GM12878 (cell line): ENCODE measurements at regions of chr17 and their contacts with region 1.

Region 1: GRCh38 chr17:72120642-72121163 is at the start of gene SOX9:
- DNase-seq: peak; percentile 73
- ATAC-seq: peak; percentile 90
- H3K4me3 ChIP-seq: peak within 1 kb of the TSS; percentile 84
- H3K27ac ChIP-seq: no peak within 1 kb of the TSS; the same call in 1 of the 2 replicates
- H3K4me1 ChIP-seq: peaks cover 5% of the 10 kb centered on the region
- H3K27me3 ChIP-seq: peaks cover 9 to 17% of the 10 kb centered on the region in 2 experiments
- CTCF ChIP-seq: no peak
- EP300 ChIP-seq: no peak; a peak in 1 of 4 replicates
- POLR2A ChIP-seq: peak; percentile 63
- RAD21 ChIP-seq: 0 out of 2 replicates have a peak, but pooled peaks have one; percentile 11
- polyA plus RNA-seq, gene SOX9: 4.5 to 8.6 TPM

Region 2: GRCh38 chr17:71472809-71473789 is 647.6 kb before region 1 on chr17:
- CTCF ChIA-PET with region 1: interaction called, 6 read pairs
- POLR2A ChIA-PET with region 1: interaction called, 3 read pairs
- RAD21 ChIA-PET with region 1: interaction called, 13 read pairs
- SMC1A ChIA-PET with region 1: interaction called, 18 read pairs
- in situ Hi-C with region 1: loop called (anchors 10 kb)
- intact Hi-C with region 1: loop called (anchors 1 kb)
- DNase-seq: no peak
- ATAC-seq: peak; percentile 89
- H3K4me3 ChIP-seq: no peak overlapping the region
- H3K27ac ChIP-seq: no peak overlapping the region
- H3K4me1 ChIP-seq: no peaks in the 10 kb centered on the region
- H3K27me3 ChIP-seq: no peaks in the 10 kb centered on the region
- CTCF ChIP-seq: peak; percentile 61 to 76 (median 70); a peak in 5 of 6 replicates
- EP300 ChIP-seq: no peak
- POLR2A ChIP-seq: no peak
- RAD21 ChIP-seq: peak; percentile 84

Region 3: DNA sequence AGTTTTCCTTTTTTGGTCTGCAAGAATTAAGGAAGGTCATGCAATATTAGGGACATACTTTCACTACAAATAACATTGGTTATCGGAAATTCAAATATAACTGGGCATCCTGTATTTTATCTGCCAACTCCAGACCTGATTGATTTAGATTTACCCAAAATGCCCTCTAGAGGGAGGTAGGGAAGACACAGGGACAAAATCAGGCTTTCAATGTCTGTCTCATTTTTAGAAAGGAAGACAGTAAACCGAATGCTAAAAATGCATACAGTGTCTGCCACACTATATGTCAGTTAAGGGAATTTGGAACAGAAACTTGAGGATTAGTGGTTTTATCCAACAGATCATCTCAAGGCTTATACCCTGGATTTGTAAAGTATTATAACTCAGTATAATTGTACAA is 161.5 kb before region 1 on chr17:
- CTCF ChIA-PET with region 1: interaction called, 19 read pairs
- POLR2A ChIA-PET with region 1: no interaction called
- RAD21 ChIA-PET with region 1: interaction called, 3 read pairs
- SMC1A ChIA-PET with region 1: interaction called, 3 read pairs
- in situ Hi-C with region 1: no loop called
- intact Hi-C with region 1: no loop called
- DNase-seq: peak; percentile 1
- ATAC-seq: peak; percentile 58; the same call in 2 of the 3 replicates
- H3K4me3 ChIP-seq: no peak overlapping the region
- H3K27ac ChIP-seq: no peak overlapping the region
- H3K4me1 ChIP-seq: no peaks in the 10 kb centered on the region
- H3K27me3 ChIP-seq: no peaks in the 10 kb centered on the region
- CTCF ChIP-seq: peak; percentile 25 to 39 (median 39); a peak in 5 of 6 replicates
- EP300 ChIP-seq: no peak
- POLR2A ChIP-seq: no peak
- RAD21 ChIP-seq: peak; percentile 58

Region 4: GRCh38 chr17:72063262-72063661 is 57.4 kb before region 1 on chr17:
- CTCF ChIA-PET with region 1: no interaction called
- POLR2A ChIA-PET with region 1: no interaction called
- RAD21 ChIA-PET with region 1: no interaction called
- SMC1A ChIA-PET with region 1: no interaction called
- in situ Hi-C with region 1: no loop called
- intact Hi-C with region 1: loop called (anchors 5 kb)
- DNase-seq: no peak
- ATAC-seq: no peak
- H3K4me3 ChIP-seq: no peak overlapping the region
- H3K27ac ChIP-seq: no peak overlapping the region
- H3K4me1 ChIP-seq: no peaks in the 10 kb centered on the region
- H3K27me3 ChIP-seq: no peaks in the 10 kb centered on the region
- CTCF ChIP-seq: no peak
- EP300 ChIP-seq: no peak
- POLR2A ChIP-seq: no peak
- RAD21 ChIP-seq: no peak

Region 5: DNA sequence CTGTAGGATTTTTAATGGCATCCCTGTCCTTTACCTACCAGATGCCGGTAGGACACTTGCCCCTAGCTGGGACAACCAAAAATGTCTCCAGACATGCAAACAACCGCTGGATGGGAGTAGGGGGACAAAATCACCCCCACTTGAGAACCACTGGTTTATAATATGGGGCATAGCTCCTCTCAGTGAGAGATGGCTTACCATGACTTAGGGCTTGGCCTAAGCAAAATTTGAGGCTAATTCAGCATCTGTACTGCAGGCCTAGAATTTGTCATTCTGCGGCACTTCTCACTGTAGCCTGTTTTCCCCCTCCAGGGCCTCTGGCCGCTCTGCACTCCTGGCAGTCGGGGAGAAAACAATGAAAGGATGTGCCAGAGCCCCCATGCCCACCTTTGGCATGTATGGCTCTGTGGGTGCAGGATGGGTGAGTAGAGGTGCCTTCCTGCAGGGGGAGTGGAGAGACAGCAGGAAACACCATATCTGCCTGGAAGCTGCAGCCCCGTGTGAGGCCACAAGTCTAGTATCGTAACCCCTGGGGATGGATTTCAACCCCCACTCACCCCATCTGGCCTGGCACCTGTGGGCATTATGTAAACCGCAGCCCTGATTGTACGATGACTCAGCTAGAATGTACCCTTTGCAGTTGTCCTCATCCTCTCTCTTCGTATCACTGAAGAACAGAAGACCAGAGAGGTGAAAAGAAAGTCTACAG is 268.2 kb after region 1 on chr17:
- CTCF ChIA-PET with region 1: no interaction called
- POLR2A ChIA-PET with region 1: no interaction called
- RAD21 ChIA-PET with region 1: interaction called, 8 read pairs
- SMC1A ChIA-PET with region 1: interaction called, 10 read pairs
- in situ Hi-C with region 1: no loop called
- intact Hi-C with region 1: no loop called
- DNase-seq: peak; percentile 93
- ATAC-seq: peak; percentile 77
- H3K4me3 ChIP-seq: no peak overlapping the region
- H3K27ac ChIP-seq: 0 out of 2 replicates have a peak overlapping the region, but pooled peaks have one; percentile 14
- H3K4me1 ChIP-seq: peaks cover 40% of the 10 kb centered on the region
- H3K27me3 ChIP-seq: no peaks in the 10 kb centered on the region
- CTCF ChIP-seq: peak; percentile 41 to 64 (median 47); a peak in 5 of 6 replicates
- EP300 ChIP-seq: peak in 1 of 2 experiments; percentile 62; a peak in 1 of 4 replicates
- POLR2A ChIP-seq: no peak
- RAD21 ChIP-seq: peak; percentile 55; the same call in 1 of the 2 replicates

Region 6: DNA sequence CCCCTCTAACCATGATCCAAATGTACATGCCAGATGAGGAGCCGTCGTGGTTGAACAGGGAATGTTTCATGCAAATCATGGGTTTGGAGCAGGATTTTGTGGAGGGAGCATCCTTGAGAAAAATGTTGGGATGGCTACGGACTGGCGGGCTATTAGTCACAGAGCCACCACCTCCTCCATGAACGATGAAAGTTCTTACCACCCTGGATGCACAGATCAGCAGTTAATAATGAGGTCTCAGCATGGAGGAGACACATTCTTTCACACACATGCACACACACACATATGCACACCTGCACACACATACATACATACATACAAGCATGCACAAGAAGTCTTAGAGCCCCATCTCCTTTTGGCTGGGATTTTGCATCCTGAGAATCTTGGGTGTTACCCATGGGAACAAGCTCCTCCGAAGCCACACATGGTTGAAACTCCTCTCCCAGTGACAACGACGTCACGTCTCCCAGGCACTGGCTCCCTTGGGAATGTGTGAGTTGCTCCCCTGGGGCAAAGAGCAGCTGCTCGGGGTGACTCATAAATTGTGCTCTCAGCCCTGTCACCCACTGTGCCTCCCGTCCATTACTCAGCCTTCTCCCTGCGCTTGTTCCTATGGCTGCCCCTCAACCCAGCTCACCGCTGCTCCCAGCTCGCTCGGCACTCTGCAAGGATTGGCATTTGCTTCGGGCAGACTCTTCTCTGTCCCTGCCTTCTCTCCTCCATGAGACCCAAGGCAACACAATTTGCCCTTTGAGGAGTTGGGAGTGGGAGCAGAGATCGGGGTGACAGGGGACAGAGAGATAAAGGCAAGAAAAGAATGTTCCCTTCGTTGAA is 344.7 kb after region 1 on chr17:
- CTCF ChIA-PET with region 1: interaction called, 7 read pairs
- POLR2A ChIA-PET with region 1: interaction called, 7 read pairs
- RAD21 ChIA-PET with region 1: interaction called, 40 read pairs
- SMC1A ChIA-PET with region 1: interaction called, 7 read pairs
- in situ Hi-C with region 1: no loop called
- intact Hi-C with region 1: loop called (anchors 2 kb)
- DNase-seq: peak; percentile 93
- ATAC-seq: peak; percentile 78
- H3K4me3 ChIP-seq: peak overlapping the region; percentile 10; the same call in 1 of the 2 replicates
- H3K27ac ChIP-seq: peak overlapping the region; percentile 78
- H3K4me1 ChIP-seq: peaks cover 41% of the 10 kb centered on the region
- H3K27me3 ChIP-seq: no peaks in the 10 kb centered on the region
- CTCF ChIP-seq: peak in 1 of 3 experiments; percentile 30; a peak in 1 of 6 replicates
- EP300 ChIP-seq: peak; percentile 38 to 66; a peak in 3 of 4 replicates
- POLR2A ChIP-seq: no peak
- RAD21 ChIP-seq: 0 out of 2 replicates have a peak, but pooled peaks have one; percentile 1

Region 7: DNA sequence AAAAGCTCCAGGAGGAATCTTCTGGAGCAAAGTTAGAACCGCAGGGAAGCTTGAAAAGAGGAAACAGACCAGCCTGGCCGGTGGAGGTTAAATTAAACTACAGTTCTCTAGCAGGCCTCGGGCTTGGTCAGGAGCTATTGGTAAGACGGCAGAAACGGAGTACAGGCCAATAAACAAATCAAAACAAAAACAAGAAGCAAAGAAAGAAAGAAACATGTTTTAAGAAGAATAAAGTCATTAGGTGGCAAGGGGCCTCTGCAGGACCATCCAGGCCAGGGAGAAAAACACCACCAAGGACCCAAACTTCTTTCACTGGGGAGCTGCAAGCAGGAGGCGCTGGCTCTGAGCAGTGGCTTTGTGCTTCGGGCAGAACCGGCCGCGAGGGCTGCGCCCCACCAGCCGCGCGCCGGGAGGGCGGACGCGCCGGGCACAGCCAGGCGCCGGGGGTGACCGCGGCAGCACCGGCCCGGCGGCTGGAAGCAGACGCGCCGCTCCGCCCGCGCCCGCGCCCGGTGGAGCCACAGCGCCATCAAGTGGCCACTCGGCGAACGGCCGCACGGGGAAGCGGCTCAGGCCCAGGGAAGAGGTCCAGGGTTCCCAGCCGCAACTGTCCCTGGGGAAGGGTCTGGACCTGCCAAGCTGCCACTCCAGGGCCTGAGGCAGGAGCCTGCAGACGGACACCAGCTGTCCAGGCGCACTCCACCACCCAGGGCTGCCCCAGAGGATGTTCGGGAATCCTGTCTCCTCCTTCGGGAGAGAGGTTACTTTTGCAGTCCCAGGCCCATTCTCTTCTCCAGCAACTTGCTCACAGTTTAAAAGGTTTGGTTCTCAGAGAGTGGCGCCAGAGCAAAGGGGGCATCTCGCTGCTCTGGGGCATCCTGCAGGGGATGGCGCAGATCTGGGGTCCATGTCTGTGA is 419.5 kb after region 1 on chr17:
- CTCF ChIA-PET with region 1: interaction called, 27 read pairs
- POLR2A ChIA-PET with region 1: interaction called, 5 read pairs
- RAD21 ChIA-PET with region 1: interaction called, 21 read pairs
- SMC1A ChIA-PET with region 1: interaction called, 15 read pairs
- in situ Hi-C with region 1: loop called (anchors 5 kb)
- intact Hi-C with region 1: loop called (anchors 1 kb)
- DNase-seq: no peak
- ATAC-seq: peak; percentile 99
- H3K4me3 ChIP-seq: no peak overlapping the region
- H3K27ac ChIP-seq: no peak overlapping the region
- H3K4me1 ChIP-seq: peaks cover 5% of the 10 kb centered on the region
- H3K27me3 ChIP-seq: no peaks in the 10 kb centered on the region
- CTCF ChIP-seq: peak; percentile 68 to 94 (median 84)
- EP300 ChIP-seq: 0 out of 4 replicates have a peak, but pooled peaks have one; percentile 7 to 25
- POLR2A ChIP-seq: no peak
- RAD21 ChIP-seq: peak; percentile 90